ENCODE measurements at regions of chr19 and their contacts with region 1.

Region 1: GRCh38 chr19:54653181-54653809 is 9.5 kb upstream of the LILRB4 start:
- DNase-seq: peak; percentile 51
- H3K4me3 ChIP-seq: no peak overlapping the region
- H3K27ac ChIP-seq: no peak overlapping the region
- H3K4me1 ChIP-seq: no peaks in the 10 kb centered on the region
- CTCF ChIP-seq: peak; percentile 88

Region 2: DNA sequence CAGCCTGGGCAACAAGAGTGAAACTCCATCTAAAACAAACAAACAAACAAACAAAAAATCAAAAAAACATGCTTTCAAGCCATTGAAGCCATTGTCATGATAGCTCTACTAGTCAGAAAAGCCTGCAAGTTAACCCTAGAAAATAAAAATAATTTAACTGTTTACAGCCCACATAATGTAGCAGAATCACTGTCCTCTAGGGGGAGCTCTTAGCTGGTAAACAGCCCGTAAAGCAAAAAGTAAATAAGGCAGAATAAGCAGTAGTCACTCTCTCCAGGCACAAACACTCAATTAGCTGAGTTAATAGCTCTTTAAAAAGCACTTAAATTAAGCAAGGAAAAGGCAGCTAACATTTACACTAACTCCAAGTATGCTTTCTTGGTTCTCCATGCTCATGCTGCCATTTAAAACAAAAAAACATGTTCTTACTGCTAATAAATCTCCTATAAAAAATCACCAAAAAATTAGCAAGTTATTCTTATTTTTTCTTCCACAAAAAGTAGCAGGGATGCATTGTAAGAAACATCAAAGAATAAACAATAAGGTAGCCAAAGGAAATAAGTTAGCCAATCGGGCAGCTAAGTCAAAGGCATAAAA is 20.8 kb after region 1 on chr19:
- CTCF ChIA-PET with region 1: interaction called, 3 read pairs
- POLR2A ChIA-PET with region 1: interaction called, 3 read pairs
- intact Hi-C with region 1: loop called (anchors 1 kb)
- DNase-seq: peak; percentile 63
- H3K4me3 ChIP-seq: no peak overlapping the region
- H3K27ac ChIP-seq: no peak overlapping the region
- H3K4me1 ChIP-seq: no peaks in the 10 kb centered on the region
- CTCF ChIP-seq: peak; percentile 92

Measured in OCI-LY7 (cell line).